HEK293 (cell line): ENCODE measurements at regions of chr9 and their contacts with region 1.

Region 1: DNA sequence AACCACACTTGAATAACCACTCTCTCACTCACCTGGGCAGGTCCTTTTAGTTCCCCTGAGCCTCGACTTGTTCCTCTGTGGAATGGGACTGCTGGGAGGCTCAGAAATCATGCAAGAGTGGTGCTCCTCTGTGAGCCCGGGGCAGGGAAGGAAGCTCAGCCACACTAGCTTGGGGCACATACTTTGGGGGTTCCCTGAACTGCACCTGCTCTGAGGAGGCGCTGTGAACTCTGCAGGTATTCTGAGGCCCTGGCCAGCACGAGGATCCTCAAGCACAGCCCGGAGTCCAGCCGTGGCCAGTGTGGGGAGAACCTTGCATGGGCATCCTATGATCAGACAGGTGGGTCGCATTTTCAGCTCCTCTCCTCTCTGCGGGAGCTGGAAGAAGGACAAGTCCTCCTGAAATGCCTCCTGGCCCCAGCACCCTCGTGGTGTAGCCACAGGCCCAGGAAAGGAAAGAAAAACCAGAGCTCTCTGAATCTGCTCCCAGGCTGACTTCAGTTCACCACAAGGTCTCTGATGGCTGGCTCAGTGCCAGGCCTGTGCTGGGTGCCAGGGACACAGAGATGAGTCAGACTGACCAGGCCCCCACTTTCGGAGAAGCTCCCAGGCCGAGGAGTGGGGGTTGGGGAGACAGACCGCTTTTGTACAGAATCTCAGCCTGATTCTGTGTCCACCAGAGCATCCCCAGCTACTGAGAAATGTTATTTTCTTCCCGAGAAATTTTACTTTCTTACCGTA is 11.9 kb downstream of the GLIPR2 start:
- H3K4me3 ChIP-seq: no peak overlapping the region
- H3K27ac ChIP-seq: no peak overlapping the region
- H3K4me1 ChIP-seq: peaks cover 3% of the 10 kb centered on the region; the same call in 1 of the 2 replicates
- CTCF ChIP-seq: no peak

Region 2: GRCh38 chr9:36118706-36119105 is 29.8 kb before region 1 on chr9:
- CTCF ChIA-PET with region 1: no interaction called
- POLR2A ChIA-PET with region 1: no interaction called
- H3K4me3 ChIP-seq: no peak overlapping the region
- H3K27ac ChIP-seq: no peak overlapping the region
- H3K4me1 ChIP-seq: no peaks in the 10 kb centered on the region
- CTCF ChIP-seq: no peak

Region 3: GRCh38 chr9:36136272-36136893 is 12.1 kb before region 1 on chr9 and contains the start of gene GLIPR2:
- CTCF ChIA-PET with region 1: interaction called, 3 read pairs
- POLR2A ChIA-PET with region 1: interaction called, 17 read pairs
- H3K4me3 ChIP-seq: peak within 1 kb of the TSS; percentile 62
- H3K27ac ChIP-seq: peak within 1 kb of the TSS; percentile 56; the same call in 1 of the 2 replicates
- H3K4me1 ChIP-seq: no peaks in the 10 kb centered on the region
- CTCF ChIP-seq: peak; percentile 40; the same call in 1 of the 2 replicates